SK-N-SH (cell line): ENCODE measurements at regions of chr1 and their contacts with region 1.

Region 1: GRCh38 chr1:150072959-150073358 is 5.4 kb downstream of the VPS45 start:
- DNase-seq: peak; percentile 26
- H3K4me3 ChIP-seq: no peak overlapping the region
- H3K27ac ChIP-seq: no peak overlapping the region; a peak in 1 of 4 replicates
- H3K4me1 ChIP-seq: peaks cover 0 to 8% of the 10 kb centered on the region in 2 experiments; a peak in 2 of 4 replicates
- H3K27me3 ChIP-seq: no peaks in the 10 kb centered on the region
- CTCF ChIP-seq: peak; percentile 71
- EP300 ChIP-seq: no peak
- RAD21 ChIP-seq: peak; percentile 54

Region 2: GRCh38 chr1:150061632-150062101 is 11.3 kb before region 1 on chr1:
- CTCF ChIA-PET with region 1: interaction called, 11 read pairs
- POLR2A ChIA-PET with region 1: no interaction called
- DNase-seq: no peak
- H3K4me3 ChIP-seq: no peak overlapping the region
- H3K27ac ChIP-seq: peak overlapping the region; percentile 60 to 84
- H3K4me1 ChIP-seq: peaks cover 15 to 16% of the 10 kb centered on the region in 2 experiments
- H3K27me3 ChIP-seq: no peaks in the 10 kb centered on the region
- CTCF ChIP-seq: no peak
- EP300 ChIP-seq: peak in 1 of 2 experiments; percentile 70; a peak in 1 of 4 replicates
- RAD21 ChIP-seq: no peak

Region 3: DNA sequence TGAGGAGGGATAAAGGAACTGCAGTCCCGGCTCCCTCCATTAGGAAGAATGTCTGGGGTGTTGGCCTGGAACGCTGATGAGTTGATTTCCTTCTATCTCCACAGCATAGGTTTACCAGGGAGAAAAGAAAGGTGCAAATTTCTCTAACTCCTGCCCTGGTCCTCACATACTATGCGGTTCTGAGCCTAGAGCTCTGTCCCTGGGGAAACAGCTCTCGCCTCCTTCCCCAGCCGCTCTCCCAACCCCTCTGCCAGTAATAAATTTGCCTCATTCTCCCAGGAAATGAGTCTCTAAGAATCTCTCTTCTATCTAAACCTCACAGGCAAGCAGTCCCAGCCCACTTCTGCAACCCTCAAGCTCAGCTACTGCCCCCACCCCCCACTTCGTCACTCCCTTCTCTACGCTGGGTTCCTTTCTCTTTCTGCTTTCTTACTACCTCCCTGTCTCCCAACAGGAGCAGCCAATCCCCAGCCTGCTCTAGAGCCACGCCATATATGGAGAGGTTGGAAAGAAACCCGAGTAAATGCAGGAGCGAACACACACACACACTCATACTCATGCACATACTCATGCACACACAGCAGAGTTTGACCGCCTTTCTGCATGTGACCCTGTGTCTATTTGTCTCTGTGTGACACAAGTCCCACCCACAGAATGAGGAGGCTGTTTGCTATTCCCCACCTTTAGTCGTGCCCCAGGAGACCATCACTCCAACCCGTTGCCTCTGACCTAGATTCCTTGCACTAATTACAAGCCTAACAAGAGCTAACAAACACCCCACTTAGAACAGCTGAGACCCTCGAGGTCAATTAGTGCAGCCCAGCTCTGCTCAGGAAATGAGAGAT is 90.1 kb after region 1 on chr1:
- CTCF ChIA-PET with region 1: interaction called, 87 read pairs
- POLR2A ChIA-PET with region 1: interaction called, 5 read pairs
- DNase-seq: peak; percentile 71
- H3K4me3 ChIP-seq: peak overlapping the region in 1 of 2 experiments; percentile 18; a peak in 1 of 4 replicates
- H3K27ac ChIP-seq: peak overlapping the region; percentile 94 to 95
- H3K4me1 ChIP-seq: peaks cover 31 to 43% of the 10 kb centered on the region in 2 experiments
- H3K27me3 ChIP-seq: no peaks in the 10 kb centered on the region
- CTCF ChIP-seq: no peak; the same call in 1 of the 2 replicates
- EP300 ChIP-seq: peak in 1 of 2 experiments; percentile 60; a peak in 1 of 4 replicates
- RAD21 ChIP-seq: no peak